Ascending aorta (tissue), 2 donors: ENCODE measurements at regions of chr15 and their contacts with region 1.

Region 1: GRCh38 chr15:89177633-89178306 is 43.6 kb downstream of the RLBP1 start:
- DNase-seq: peak in 1 of 2 donors; percentile 81
- H3K4me3 ChIP-seq: no peak overlapping the region
- H3K27ac ChIP-seq: peak overlapping the region in 1 of 2 donors; percentile 2
- H3K4me1 ChIP-seq: peaks cover 0 to 17% of the 10 kb centered on the region in 2 donors
- H3K27me3 ChIP-seq: no peaks in the 10 kb centered on the region
- CTCF ChIP-seq: peak; percentile 76 to 88 (median 77)

Region 2: GRCh38 chr15:88897456-88898194 is 280.1 kb before region 1 on chr15:
- intact Hi-C with region 1: loop called (anchors 1 kb)
- DNase-seq: peak; percentile 68 to 94
- H3K4me3 ChIP-seq: peak overlapping the region in 1 of 2 donors; percentile 28
- H3K27ac ChIP-seq: peak overlapping the region; percentile 81 to 83
- H3K4me1 ChIP-seq: peaks cover 3 to 68% of the 10 kb centered on the region in 2 donors
- H3K27me3 ChIP-seq: no peaks in the 10 kb centered on the region
- CTCF ChIP-seq: peak; percentile 70 to 80 (median 71)

Region 3: DNA sequence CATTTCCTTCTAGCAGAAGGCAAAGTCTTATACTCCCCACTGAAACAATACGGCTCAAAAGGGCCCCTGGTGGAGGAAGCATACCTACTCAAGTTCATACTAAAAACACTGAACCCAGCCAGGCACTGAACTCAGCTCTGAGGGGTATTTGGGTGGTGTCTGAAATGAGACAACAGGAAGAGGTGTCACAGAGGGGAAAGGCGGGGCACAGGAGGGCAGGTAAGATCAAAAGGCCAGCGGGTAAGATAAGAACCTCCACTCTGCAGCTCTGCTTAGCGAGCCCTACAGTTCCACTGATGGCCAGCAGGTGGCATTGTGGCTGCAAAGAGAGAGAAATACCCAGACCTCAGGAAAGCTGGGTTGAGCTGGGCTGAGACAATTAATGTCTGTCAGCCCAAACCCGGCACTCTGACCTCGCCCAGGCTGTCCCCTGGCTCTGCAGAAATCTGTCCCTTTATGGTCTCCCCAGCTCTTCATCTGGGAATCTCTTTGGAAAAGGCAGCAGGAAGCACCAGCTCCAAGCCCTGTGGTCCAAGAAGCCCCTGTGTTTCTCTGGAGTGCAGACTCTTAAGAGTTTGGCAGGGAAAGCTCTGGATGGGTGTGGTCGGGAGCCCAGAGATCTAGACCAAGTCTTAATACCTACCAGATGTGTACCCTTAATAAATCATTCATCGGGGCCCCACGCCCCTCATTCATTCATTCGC is 273.0 kb before region 1 on chr15:
- intact Hi-C with region 1: loop called (anchors 2 kb)
- DNase-seq: peak in 1 of 2 donors; percentile 93
- H3K4me3 ChIP-seq: peak overlapping the region in 1 of 2 donors; percentile 20
- H3K27ac ChIP-seq: peak overlapping the region; percentile 94
- H3K4me1 ChIP-seq: peaks cover 17 to 80% of the 10 kb centered on the region in 2 donors
- H3K27me3 ChIP-seq: no peaks in the 10 kb centered on the region
- CTCF ChIP-seq: peak; percentile 96 to 98 (median 96)

Region 4: GRCh38 chr15:89057504-89058133 is 120.2 kb before region 1 on chr15:
- intact Hi-C with region 1: loop called (anchors 1 kb)
- DNase-seq: peak; percentile 34 to 92
- H3K4me3 ChIP-seq: no peak overlapping the region
- H3K27ac ChIP-seq: peak overlapping the region in 1 of 2 donors; percentile 50
- H3K4me1 ChIP-seq: peaks cover 0 to 21% of the 10 kb centered on the region in 2 donors
- H3K27me3 ChIP-seq: no peaks in the 10 kb centered on the region
- CTCF ChIP-seq: peak; percentile 97 to 98 (median 98)

Region 5: GRCh38 chr15:89139400-89140166 is 38.2 kb before region 1 on chr15:
- intact Hi-C with region 1: loop called (anchors 5 kb)
- DNase-seq: no peak
- H3K4me3 ChIP-seq: no peak overlapping the region
- H3K27ac ChIP-seq: peak overlapping the region; percentile 92 to 96
- H3K4me1 ChIP-seq: peaks cover 57 to 84% of the 10 kb centered on the region in 2 donors
- H3K27me3 ChIP-seq: no peaks in the 10 kb centered on the region
- CTCF ChIP-seq: peak in 2 of 3 experiments; percentile 9 to 10

Region 6: GRCh38 chr15:90174140-90174875 is 996.5 kb after region 1 on chr15:
- intact Hi-C with region 1: loop called (anchors 5 kb)
- DNase-seq: peak; percentile 30 to 88
- H3K4me3 ChIP-seq: peak overlapping the region in 1 of 2 donors; percentile 37
- H3K27ac ChIP-seq: peak overlapping the region; percentile 82 to 86
- H3K4me1 ChIP-seq: peaks cover 10% of the 10 kb centered on the region in 2 donors
- H3K27me3 ChIP-seq: no peaks in the 10 kb centered on the region
- CTCF ChIP-seq: no peak